ENCODE measurements at regions of chr18 and their contacts with region 1.

Region 1: GRCh38 chr18:6885992-6886796 is 156.7 kb downstream of the ARHGAP28 start:
- DNase-seq: peak in 3 of 10 donors; percentile 14 to 58 (median 28)
- H3K4me3 ChIP-seq: no peak overlapping the region
- H3K27ac ChIP-seq: peak overlapping the region in 1 of 59 donors; percentile 61
- H3K27me3 ChIP-seq: peaks cover 0 to 5% (median 0%) of the 10 kb centered on the region in 45 donors
- CTCF ChIP-seq: peak; percentile 65 to 96 (median 81)

Region 2: GRCh38 chr18:5600378-5601071 is 1285.7 kb before region 1 on chr18:
- intact Hi-C with region 1: loop called in 1 of 2 experiments (anchors 10 kb)
- DNase-seq: no peak
- H3K4me3 ChIP-seq: no peak overlapping the region
- H3K27ac ChIP-seq: peak overlapping the region in 7 of 59 donors; percentile 6 to 53 (median 37)
- H3K27me3 ChIP-seq: no peaks in the 10 kb centered on the region
- CTCF ChIP-seq: peak; percentile 24 to 78 (median 55)

Region 3: DNA sequence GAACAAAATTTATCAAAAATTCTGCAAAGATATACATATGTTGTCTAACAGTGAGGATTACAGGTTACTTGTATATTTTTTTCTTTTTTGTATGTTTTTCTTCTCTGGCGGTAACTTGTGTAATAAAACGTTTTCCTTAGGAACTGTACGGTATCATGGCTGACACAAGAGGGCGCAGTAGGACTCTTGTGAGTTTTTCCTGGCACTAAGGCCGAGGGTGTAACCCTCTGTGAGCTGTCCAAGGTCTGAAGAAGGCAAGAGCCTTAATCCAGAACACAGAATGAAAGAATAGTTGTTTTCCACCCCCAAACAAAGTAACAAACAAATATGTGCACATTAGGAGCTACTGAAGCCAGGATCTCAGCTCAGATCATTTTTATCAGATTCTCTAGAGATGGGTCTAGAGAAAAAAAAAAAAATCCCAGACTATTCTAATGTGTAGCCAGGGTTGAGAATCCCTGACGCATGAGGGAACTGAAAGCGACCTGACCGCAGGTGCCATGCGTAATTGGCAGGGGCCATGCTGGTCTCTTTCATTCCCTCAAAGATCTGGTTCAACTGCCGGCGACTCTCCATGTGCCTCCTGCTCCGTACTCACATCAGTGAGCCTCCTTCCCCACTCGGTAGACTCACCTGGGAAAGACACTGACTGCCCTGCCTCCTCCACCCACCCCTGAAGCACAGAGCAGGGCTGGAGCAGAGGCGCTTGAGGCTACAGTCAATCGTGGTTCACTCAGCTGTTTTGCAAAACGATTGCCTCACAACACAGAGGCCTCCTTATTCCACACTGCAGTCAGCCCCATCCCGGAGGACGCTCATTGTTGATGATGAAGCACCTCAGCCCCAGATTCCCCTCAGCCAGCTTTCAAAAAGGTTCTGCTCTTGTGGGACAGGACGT is 1017.7 kb before region 1 on chr18:
- intact Hi-C with region 1: loop called (anchors 5 kb)
- DNase-seq: peak; percentile 20 to 69 (median 55)
- H3K4me3 ChIP-seq: no peak overlapping the region
- H3K27ac ChIP-seq: no peak overlapping the region
- H3K27me3 ChIP-seq: peaks cover 0 to 9% (median 0%) of the 10 kb centered on the region in 45 donors
- CTCF ChIP-seq: peak; percentile 59 to 92 (median 83)

Region 4: GRCh38 chr18:6543330-6543908 is 342.8 kb before region 1 on chr18:
- intact Hi-C with region 1: loop called (anchors 2 to 5 kb)
- DNase-seq: no peak
- H3K4me3 ChIP-seq: no peak overlapping the region
- H3K27ac ChIP-seq: no peak overlapping the region
- H3K27me3 ChIP-seq: peaks cover 0 to 3% (median 0%) of the 10 kb centered on the region in 45 donors
- CTCF ChIP-seq: peak; percentile 48 to 83 (median 67)

Region 5: DNA sequence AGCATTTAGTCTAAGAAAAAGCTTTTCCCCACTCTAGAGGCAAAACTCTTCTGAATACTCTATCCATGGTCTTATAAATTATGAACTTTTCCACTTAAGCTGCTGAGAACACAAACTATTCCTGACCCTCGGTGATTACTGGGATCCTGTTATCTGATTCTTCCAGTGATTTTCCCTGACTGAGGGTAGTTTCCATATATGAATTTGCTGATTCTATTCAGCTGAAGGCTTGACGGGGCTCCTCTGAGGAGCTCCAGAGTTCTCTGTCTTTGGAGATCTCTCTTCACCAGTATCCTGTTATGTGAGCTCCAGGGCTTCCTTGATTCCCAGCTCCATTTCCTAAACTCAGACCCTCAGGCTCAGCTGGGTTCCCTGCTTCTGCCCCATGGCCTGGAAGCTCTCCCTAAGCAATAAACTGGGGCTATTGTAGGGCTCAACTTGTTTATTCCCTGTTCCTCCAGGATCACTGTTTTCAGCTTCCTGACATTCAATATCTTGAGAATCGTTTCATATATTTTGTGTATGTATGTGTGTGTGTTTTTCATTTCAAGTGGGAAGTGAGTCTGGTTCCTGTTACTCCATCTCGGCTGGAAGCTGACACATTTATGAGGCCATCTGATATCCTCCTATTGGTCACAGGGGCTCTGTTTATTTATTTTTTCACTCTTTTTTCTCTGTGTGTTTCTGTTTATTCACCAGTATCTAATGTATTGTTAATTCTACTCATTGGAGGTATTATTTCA is 78.5 kb before region 1 on chr18:
- intact Hi-C with region 1: no loop called
- DNase-seq: no peak
- H3K4me3 ChIP-seq: no peak overlapping the region
- H3K27ac ChIP-seq: no peak overlapping the region
- H3K27me3 ChIP-seq: no peaks in the 10 kb centered on the region
- CTCF ChIP-seq: no peak

Measured in dorsolateral prefrontal cortex (tissue), 120 donors.